CD4-positive, alpha-beta T cell (primary cell): ENCODE measurements at regions of chr19 and their contacts with region 1.

Region 1: DNA sequence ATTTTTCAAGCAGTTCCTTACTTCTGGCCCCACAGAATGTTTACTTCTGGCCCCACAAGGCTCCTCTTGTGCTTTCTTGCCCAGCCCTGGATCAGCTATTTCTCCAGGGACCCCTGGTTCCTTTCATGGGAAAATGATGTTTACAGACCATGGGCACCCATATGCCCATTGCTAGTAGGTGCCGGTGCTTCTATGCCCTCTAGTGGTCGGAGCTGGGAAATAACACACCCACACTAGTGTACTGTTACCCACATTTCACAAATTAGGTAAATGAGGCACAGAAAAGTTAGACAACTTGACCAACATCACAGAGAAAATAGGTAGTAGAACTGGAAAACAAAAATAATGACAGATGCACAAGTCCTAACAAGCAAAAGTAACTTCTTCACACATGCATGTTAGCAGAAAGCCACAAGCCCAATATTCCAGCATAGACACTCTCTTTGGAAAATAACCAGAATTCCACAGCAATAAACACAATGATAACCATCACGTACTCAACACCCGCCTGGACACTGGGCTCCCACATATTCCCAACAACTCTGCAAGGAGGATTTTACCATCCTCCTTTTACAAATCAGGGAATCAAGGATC is 1.3 kb upstream of the CEACAM6 start:
- DNase-seq: peak; percentile 55 to 82 (median 66)
- ATAC-seq: peak; percentile 95
- H3K4me3 ChIP-seq: no peak overlapping the region
- H3K4me3 Mint-ChIP-seq: no peak overlapping the region
- H3K27ac ChIP-seq: no peak overlapping the region
- H3K27ac Mint-ChIP-seq: no peak overlapping the region
- H3K4me1 ChIP-seq: peaks cover 8% of the 10 kb centered on the region
- H3K4me1 Mint-ChIP-seq: peaks cover 6% of the 10 kb centered on the region
- H3K27me3 ChIP-seq: peaks cover 7 to 12% of the 10 kb centered on the region in 2 experiments
- H3K27me3 Mint-ChIP-seq: peaks cover 55% of the 10 kb centered on the region
- CTCF ChIP-seq: peak; percentile 70

Region 2: DNA sequence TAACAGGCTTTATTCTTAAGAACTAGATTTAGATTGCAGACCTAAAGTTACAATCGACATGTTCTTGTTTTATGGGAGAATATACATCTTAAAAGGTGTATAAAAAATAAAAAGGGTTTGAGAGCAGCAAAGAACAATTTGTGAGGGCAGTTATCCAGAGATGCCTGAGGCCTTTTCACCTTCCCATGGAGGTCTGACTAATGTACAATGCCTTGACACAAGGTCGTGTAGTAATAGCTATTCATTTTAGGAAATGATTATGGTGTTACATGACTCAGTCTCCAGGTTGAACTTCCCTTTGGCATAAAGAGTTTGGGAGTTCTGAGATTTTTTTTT is 21.3 kb after region 1 on chr19:
- CTCF ChIA-PET with region 1: interaction called, 19 read pairs
- POLR2A ChIA-PET with region 1: interaction called, 10 read pairs
- intact Hi-C with region 1: no loop called
- DNase-seq: no peak
- ATAC-seq: no peak
- H3K4me3 ChIP-seq: no peak overlapping the region
- H3K4me3 Mint-ChIP-seq: no peak overlapping the region
- H3K27ac ChIP-seq: no peak overlapping the region
- H3K27ac Mint-ChIP-seq: no peak overlapping the region
- H3K4me1 ChIP-seq: peaks cover 33% of the 10 kb centered on the region
- H3K4me1 Mint-ChIP-seq: peaks cover 44% of the 10 kb centered on the region
- H3K27me3 ChIP-seq: peaks cover 7 to 27% of the 10 kb centered on the region in 2 experiments
- H3K27me3 Mint-ChIP-seq: peaks cover 93% of the 10 kb centered on the region
- CTCF ChIP-seq: no peak

Region 3: DNA sequence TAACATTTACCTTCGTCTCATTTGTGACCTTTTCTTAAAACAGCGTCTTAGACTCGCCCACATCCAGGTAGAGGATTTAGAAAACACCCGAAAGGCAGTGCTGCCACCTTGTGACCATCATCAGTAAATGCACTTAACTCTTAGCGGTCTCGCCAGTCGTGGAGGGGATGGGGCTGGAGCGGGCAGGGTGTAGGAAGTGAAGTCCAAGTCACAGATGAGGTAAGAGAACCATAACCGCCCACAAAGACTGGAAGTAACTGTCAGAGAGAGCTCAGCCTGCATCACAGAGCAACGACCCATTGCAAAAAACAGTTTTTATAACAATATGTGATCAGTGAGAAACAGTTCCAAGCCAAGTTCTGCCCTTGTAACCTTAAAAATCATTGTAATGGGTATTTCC is 31.6 kb after region 1 on chr19:
- CTCF ChIA-PET with region 1: interaction called, 55 read pairs
- POLR2A ChIA-PET with region 1: interaction called, 10 read pairs
- intact Hi-C with region 1: loop called (anchors 1 kb)
- DNase-seq: peak; percentile 52 to 91 (median 66)
- ATAC-seq: peak; percentile 98
- H3K4me3 ChIP-seq: no peak overlapping the region
- H3K4me3 Mint-ChIP-seq: no peak overlapping the region
- H3K27ac ChIP-seq: no peak overlapping the region
- H3K27ac Mint-ChIP-seq: no peak overlapping the region
- H3K4me1 ChIP-seq: peaks cover 11% of the 10 kb centered on the region
- H3K4me1 Mint-ChIP-seq: peaks cover 17% of the 10 kb centered on the region
- H3K27me3 ChIP-seq: peaks cover 7 to 23% of the 10 kb centered on the region in 2 experiments
- H3K27me3 Mint-ChIP-seq: peaks cover 67% of the 10 kb centered on the region
- CTCF ChIP-seq: peak; percentile 81

Region 4: GRCh38 chr19:41795031-41795461 is 41.0 kb after region 1 on chr19:
- CTCF ChIA-PET with region 1: interaction called, 14 read pairs
- POLR2A ChIA-PET with region 1: no interaction called
- intact Hi-C with region 1: no loop called
- DNase-seq: peak; percentile 33 to 81 (median 51)
- ATAC-seq: peak; percentile 98
- H3K4me3 ChIP-seq: no peak overlapping the region
- H3K4me3 Mint-ChIP-seq: no peak overlapping the region
- H3K27ac ChIP-seq: no peak overlapping the region
- H3K27ac Mint-ChIP-seq: no peak overlapping the region
- H3K4me1 ChIP-seq: no peaks in the 10 kb centered on the region
- H3K4me1 Mint-ChIP-seq: no peaks in the 10 kb centered on the region
- H3K27me3 ChIP-seq: peaks cover 18 to 19% of the 10 kb centered on the region in 2 experiments
- H3K27me3 Mint-ChIP-seq: peaks cover 34% of the 10 kb centered on the region
- CTCF ChIP-seq: peak; percentile 90

Region 5: GRCh38 chr19:41821003-41821735 is 67.1 kb after region 1 on chr19:
- CTCF ChIA-PET with region 1: interaction called, 11 read pairs
- POLR2A ChIA-PET with region 1: no interaction called
- intact Hi-C with region 1: loop called in 1 of 2 experiments (anchors 1 kb)
- DNase-seq: peak in 13 of 14 experiments; percentile 7 to 76 (median 21)
- ATAC-seq: peak; percentile 81
- H3K4me3 ChIP-seq: no peak overlapping the region
- H3K4me3 Mint-ChIP-seq: no peak overlapping the region
- H3K27ac ChIP-seq: no peak overlapping the region
- H3K27ac Mint-ChIP-seq: no peak overlapping the region
- H3K4me1 ChIP-seq: peaks cover 2% of the 10 kb centered on the region
- H3K4me1 Mint-ChIP-seq: no peaks in the 10 kb centered on the region
- H3K27me3 ChIP-seq: peaks cover 0 to 2% of the 10 kb centered on the region in 2 experiments
- H3K27me3 Mint-ChIP-seq: peaks cover 25% of the 10 kb centered on the region
- CTCF ChIP-seq: peak; percentile 66

Region 6: GRCh38 chr19:41844601-41845000 is 90.6 kb after region 1 on chr19 and contains the start of gene LYPD4:
- CTCF ChIA-PET with region 1: no interaction called
- POLR2A ChIA-PET with region 1: no interaction called
- intact Hi-C with region 1: no loop called
- DNase-seq: no peak
- ATAC-seq: no peak
- H3K4me3 ChIP-seq: no peak within 1 kb of the TSS
- H3K4me3 Mint-ChIP-seq: no peak within 1 kb of the TSS
- H3K27ac ChIP-seq: no peak within 1 kb of the TSS
- H3K27ac Mint-ChIP-seq: no peak within 1 kb of the TSS
- H3K4me1 ChIP-seq: no peaks in the 10 kb centered on the region
- H3K4me1 Mint-ChIP-seq: no peaks in the 10 kb centered on the region
- H3K27me3 ChIP-seq: no peaks in the 10 kb centered on the region
- H3K27me3 Mint-ChIP-seq: no peaks in the 10 kb centered on the region
- CTCF ChIP-seq: no peak
- total RNA-seq, gene LYPD4: not detected